Caco-2 (cell line): ENCODE measurements at regions of chr4 and their contacts with region 1.

Region 1: GRCh38 chr4:40149960-40150385 is 46.9 kb upstream of the RHOH start:
- DNase-seq: peak; percentile 54 to 69
- H3K4me3 ChIP-seq: no peak overlapping the region
- H3K4me3 Mint-ChIP-seq: no peak overlapping the region
- H3K27ac Mint-ChIP-seq: no peak overlapping the region
- H3K4me1 ChIP-seq: peaks cover 15% of the 10 kb centered on the region; the same call in 1 of the 2 replicates
- H3K4me1 Mint-ChIP-seq: no peaks in the 10 kb centered on the region
- H3K27me3 ChIP-seq: no peaks in the 10 kb centered on the region
- H3K27me3 Mint-ChIP-seq: no peaks in the 10 kb centered on the region
- CTCF ChIP-seq: peak; percentile 74 to 79

Region 2: DNA sequence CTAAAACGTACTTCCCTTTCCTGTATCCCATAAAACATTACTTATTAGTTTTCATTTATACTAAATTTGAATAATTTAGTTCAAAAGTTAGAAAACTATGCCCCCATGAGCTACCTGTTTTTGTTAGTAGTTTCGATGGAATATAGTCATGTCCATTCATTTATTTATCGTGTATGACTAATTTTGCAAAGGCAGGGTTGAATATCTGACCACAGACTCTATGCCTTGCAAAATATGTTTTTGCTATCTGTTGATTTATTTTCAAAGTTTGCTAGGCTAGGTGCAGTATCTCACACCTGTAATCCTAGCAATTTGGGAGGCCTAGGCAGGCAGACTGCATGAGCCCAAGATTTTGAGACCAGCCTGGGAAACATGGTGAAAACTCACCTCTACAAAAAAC is 250.7 kb before region 1 on chr4:
- CTCF ChIA-PET with region 1: no interaction called
- POLR2A ChIA-PET with region 1: no interaction called
- intact Hi-C with region 1: no loop called
- DNase-seq: no peak
- H3K4me3 ChIP-seq: no peak overlapping the region
- H3K4me3 Mint-ChIP-seq: no peak overlapping the region
- H3K27ac Mint-ChIP-seq: no peak overlapping the region
- H3K4me1 ChIP-seq: peaks cover 23% of the 10 kb centered on the region
- H3K4me1 Mint-ChIP-seq: peaks cover 16% of the 10 kb centered on the region
- H3K27me3 ChIP-seq: no peaks in the 10 kb centered on the region
- H3K27me3 Mint-ChIP-seq: no peaks in the 10 kb centered on the region
- CTCF ChIP-seq: no peak

Region 3: DNA sequence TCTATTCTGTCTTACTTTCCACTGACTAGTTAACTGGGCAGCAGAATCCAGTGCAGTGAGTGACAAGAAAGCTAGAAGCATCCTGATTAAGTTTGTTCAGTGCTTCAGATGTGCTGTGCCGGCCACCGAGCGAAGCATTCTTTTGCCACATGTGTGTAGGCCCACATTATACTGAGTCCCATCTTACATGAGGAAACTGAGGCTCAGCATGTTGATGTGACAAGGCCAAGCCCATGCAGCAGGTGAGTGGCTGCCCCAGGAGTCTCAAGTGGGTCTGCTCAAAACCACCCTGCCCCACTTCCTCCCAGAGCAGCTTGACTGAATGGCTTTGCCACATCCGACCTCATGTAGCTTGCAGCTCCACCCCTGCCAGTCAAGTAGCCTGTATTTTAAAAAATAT is 97.4 kb after region 1 on chr4:
- CTCF ChIA-PET with region 1: no interaction called
- POLR2A ChIA-PET with region 1: no interaction called
- intact Hi-C with region 1: loop called (anchors 2 kb)
- DNase-seq: no peak
- H3K4me3 ChIP-seq: no peak overlapping the region
- H3K4me3 Mint-ChIP-seq: no peak overlapping the region
- H3K27ac Mint-ChIP-seq: no peak overlapping the region
- H3K4me1 ChIP-seq: no peaks in the 10 kb centered on the region
- H3K4me1 Mint-ChIP-seq: no peaks in the 10 kb centered on the region
- H3K27me3 ChIP-seq: no peaks in the 10 kb centered on the region
- H3K27me3 Mint-ChIP-seq: no peaks in the 10 kb centered on the region
- CTCF ChIP-seq: no peak

Region 4: DNA sequence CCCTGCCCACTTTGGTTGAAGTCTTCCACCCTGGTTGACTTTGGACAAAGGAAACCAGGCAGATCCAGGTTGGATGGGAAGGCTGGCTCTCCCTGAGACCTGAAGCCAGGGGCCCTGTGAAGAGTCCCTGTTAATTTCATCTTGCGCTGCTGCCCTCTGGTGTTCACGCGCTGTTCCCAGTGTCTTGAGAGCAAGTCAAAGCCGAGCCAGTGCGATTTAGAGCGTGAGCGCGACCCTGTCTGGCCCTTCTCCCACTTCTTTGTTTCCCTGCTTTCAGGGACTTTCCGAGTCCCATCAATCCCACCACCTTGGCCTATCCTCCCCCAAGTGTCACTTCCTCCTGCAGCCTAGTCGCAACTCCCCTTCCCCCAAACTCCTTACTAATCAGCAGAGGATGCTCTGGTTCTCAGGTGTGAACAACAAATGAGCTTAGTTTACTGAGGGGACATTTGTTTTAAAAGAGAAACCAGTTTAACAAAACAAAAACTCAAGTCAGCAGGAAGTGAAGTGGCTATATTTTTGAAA is 159.3 kb after region 1 on chr4:
- CTCF ChIA-PET with region 1: no interaction called
- POLR2A ChIA-PET with region 1: no interaction called
- intact Hi-C with region 1: loop called (anchors 1 kb)
- DNase-seq: peak; percentile 84 to 86
- H3K4me3 ChIP-seq: no peak overlapping the region
- H3K4me3 Mint-ChIP-seq: peak overlapping the region; percentile 41
- H3K27ac Mint-ChIP-seq: no peak overlapping the region
- H3K4me1 ChIP-seq: peaks cover 13% of the 10 kb centered on the region
- H3K4me1 Mint-ChIP-seq: peaks cover 18% of the 10 kb centered on the region
- H3K27me3 ChIP-seq: no peaks in the 10 kb centered on the region
- H3K27me3 Mint-ChIP-seq: no peaks in the 10 kb centered on the region
- CTCF ChIP-seq: peak; percentile 78 to 83

Region 5: GRCh38 chr4:40316782-40317635 is 167.0 kb after region 1 on chr4:
- CTCF ChIA-PET with region 1: no interaction called
- POLR2A ChIA-PET with region 1: no interaction called
- intact Hi-C with region 1: loop called (anchors 2 kb)
- DNase-seq: peak; percentile 58 to 74
- H3K4me3 ChIP-seq: no peak overlapping the region
- H3K4me3 Mint-ChIP-seq: peak overlapping the region; percentile 46
- H3K27ac Mint-ChIP-seq: peak overlapping the region; percentile 49
- H3K4me1 ChIP-seq: peaks cover 10% of the 10 kb centered on the region; the same call in 1 of the 2 replicates
- H3K4me1 Mint-ChIP-seq: peaks cover 32% of the 10 kb centered on the region
- H3K27me3 ChIP-seq: no peaks in the 10 kb centered on the region
- H3K27me3 Mint-ChIP-seq: no peaks in the 10 kb centered on the region
- CTCF ChIP-seq: peak; percentile 57 to 76

Region 6: DNA sequence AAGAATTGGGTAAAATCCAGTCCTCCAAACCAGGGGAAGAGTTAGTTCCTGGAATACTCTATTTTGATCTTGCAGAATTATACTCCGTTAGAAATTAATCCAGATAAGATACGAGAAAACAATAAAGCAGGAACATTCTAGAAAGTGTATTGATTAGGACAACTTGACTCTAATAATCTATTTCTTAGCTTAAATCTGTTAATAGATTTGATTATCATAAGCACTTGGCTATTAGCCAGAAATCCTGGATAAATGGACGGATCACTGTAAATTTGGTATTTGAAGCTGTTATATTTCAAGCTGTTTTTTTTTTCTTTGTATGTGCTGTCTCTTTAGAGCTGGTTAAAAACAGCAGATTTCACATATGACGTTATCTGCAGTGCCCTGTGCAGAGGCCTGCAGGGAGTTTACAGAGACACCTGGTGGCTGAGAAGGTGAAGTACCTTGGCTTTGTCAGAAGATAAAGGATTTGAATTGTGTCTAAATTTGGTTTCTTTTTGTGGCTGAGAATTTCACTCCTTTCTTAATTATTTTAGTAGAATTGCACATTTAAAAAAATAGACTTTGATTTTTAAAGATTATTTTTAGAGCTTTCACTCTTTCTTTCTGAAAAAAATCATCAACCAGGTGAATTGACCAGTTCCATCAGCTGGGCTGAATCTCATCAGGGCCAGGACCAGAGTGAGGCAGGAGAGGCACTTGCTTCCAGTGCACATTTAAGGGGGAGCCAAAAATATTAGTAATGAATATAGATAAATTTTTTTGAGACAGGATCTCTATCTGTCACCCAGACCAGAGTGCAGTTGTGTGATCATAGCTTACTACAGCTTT is 175.4 kb after region 1 on chr4:
- CTCF ChIA-PET with region 1: interaction called, 5 read pairs
- POLR2A ChIA-PET with region 1: no interaction called
- intact Hi-C with region 1: loop called (anchors 1 kb)
- DNase-seq: peak; percentile 55 to 59
- H3K4me3 ChIP-seq: no peak overlapping the region
- H3K4me3 Mint-ChIP-seq: no peak overlapping the region
- H3K27ac Mint-ChIP-seq: no peak overlapping the region
- H3K4me1 ChIP-seq: peaks cover 9% of the 10 kb centered on the region; the same call in 1 of the 2 replicates
- H3K4me1 Mint-ChIP-seq: peaks cover 17% of the 10 kb centered on the region
- H3K27me3 ChIP-seq: no peaks in the 10 kb centered on the region; the same call in 1 of the 2 replicates
- H3K27me3 Mint-ChIP-seq: no peaks in the 10 kb centered on the region
- CTCF ChIP-seq: peak; percentile 76 to 83